Sciatic nerve (tissue), 2 donors: ENCODE measurements at regions of chr15 and their contacts with region 1.

Region 1: DNA sequence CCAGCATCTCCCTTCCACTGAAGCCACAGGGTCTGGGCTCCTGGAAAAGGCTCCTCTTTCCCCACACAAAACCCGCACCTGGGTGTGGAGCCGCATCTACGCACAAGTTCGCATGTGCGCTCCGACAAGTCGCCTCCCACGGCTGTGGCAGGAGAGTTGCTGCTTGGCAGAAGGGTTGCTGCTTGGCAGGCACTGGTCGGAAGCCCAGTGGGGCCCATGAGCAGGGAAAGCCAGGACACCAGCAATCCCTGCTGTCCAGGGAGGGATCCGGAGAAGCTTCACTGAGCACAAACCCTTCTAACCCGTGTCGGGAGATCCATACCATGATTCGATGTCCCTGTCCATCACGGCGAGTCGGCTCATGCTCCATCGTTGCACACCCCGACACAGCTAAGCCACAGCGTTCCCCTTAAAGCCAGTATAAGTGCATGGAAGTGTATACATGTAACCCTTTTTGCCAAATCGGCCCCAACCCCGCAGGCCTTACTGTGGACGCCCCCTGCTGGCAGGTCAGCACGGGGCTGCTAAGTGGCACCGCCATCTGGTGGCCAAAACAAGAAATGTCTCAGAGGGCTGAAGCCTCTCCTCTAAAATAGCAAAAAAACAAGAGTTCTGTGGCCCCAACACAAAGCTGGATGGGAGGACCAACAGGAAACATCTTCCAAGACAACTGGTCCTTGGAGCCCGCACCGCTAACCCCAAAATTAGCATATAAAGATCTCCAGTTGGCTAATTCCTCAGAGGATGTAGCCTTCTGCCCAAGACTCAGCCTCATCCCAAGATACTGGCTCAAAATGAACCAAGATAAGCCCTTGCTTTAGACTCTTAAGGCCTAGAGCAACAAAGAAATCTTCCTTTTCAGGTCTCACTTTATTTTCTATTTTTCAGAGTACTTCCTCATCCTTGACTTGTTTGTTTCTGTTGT is 8.3 kb downstream of the ANKRD63 start:
- DNase-seq: peak; percentile 91
- ATAC-seq: peak; percentile 34

Region 2: DNA sequence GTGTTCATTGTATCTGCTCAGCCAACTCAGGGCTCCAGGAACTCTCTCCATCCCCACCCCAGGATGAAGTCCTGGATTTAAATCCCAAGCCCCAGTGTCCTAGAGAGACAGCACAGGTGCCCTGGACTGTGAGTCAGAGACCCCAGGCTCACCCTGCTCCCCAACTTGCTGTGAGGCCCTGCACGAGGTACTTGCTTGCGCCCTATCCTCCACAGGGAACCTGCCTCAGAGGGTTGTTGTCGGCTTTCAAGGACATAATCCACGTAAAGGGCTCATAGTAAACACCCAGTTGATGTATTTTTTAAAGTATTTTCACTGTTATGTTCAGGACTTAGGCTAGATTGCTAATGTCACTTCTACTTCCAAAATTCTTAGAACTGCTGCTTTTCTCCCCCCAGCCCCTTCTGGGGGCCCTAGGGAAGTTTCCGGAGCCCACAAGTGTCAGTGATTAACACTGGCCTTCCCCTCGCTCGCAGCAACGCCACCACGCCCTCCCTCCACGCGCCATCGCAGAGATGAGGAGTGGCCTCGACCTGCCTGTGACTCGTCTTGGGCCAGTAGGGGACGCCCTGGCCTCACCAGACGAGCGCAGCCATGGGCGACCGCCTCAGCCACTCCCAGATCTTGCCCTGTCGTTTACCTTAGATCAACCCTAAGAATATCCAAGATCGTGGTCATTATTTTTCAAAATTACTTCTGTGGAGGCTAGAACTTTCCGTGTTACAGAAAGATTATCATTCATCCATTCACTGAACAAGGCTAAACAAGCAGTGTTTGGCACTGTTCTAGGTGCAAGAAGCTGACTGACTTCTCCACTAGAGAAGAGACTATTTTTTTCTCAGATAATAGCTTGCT is 229.7 kb before region 1 on chr15:
- intact Hi-C with region 1: loop called (anchors 5 kb)
- DNase-seq: peak; percentile 94
- ATAC-seq: peak; percentile 96

Region 3: DNA sequence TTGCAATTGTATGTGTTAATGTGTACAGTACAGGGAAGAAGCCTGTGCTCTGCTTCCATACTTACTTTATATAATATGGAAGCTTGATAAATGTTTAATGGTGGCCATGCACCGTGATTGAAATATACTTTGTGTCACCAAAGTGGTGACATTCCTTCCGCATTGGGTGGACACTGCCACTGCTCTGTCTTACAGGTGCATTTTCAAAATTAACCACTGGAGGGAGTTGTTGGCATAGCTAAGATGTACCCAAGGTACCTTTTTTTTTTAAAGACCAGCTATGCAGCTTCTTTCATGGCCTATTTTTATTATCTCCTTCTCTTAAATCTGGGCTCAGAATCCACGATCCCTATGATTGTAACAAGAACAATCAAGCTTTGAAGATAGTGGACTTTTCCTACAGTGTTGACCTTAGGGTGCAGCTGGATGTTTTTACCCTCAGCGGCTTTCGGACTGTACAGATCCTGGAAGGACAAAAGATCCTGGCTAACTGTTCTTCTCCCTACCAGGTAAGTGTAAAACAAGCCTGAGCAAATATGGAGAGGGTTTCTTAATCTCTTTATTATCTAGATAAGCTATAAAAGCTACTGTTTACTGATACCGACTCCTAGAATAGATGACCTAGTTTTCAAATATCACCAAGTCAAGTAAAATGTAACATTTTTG is 57.3 kb before region 1 on chr15:
- intact Hi-C with region 1: loop called (anchors 5 kb)
- DNase-seq: no peak
- ATAC-seq: peak; percentile 84

Region 4: DNA sequence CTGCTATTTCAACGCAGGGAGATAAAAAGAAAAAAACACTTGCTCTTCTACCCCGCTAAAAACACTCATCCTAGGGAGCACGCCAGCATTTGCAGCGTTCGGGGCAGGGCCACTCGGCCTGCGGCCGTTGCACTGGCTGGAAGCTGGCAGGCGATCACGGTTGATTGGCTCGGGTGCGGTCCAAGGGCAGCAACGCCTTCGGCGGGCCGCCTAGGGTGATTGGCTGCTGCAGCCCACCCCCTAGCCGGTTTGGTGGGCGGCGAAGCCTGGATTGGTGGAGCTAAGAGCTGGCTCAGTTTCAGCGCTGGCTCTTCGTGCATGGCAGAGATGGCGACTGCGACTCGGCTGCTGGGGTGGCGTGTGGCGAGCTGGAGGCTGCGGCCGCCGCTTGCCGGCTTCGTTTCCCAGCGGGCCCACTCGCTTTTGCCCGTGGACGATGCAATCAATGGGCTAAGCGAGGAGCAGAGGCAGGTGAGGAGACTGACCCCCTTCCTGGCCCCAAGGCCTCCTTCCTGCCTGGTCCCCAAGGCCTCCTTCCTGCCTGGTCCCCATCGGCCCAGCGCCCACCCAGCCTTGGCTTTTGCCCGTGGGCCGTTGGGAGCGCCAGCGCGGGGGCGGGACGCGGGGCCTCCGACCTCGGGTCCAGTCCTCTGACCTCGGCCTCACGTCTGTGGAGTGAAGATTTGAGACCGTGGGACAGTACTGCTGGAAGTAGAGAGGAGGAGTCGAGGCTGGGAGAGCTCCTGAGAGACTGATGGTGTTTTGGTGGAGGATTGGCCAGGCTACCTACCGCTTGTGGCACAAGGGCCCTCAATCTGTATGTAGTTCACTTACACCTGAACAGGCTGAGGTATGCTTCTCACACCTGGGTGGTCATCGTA is 131.1 kb after region 1 on chr15 and contains the start of gene IVD:
- intact Hi-C with region 1: no loop called
- DNase-seq: peak; percentile 97
- ATAC-seq: peak; percentile 100
- total RNA-seq, gene IVD: 67.8 TPM

Region 5: DNA sequence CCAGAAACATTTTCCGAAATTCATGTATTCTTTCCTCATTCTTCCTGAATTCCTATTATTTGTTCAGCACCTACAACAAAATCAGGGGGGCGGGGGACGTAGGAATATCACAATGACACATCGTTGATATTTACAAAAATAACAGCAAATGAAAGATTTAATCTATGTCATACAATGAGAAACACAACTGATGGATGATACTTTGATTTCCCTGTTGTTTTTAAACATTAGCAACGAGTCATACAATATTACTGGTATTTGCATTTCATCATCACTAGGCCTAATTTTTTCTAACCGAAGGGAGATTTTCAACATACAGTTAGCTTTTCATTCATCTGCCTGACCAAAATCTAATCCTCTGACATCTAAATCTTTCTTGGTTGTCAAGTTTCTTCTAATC is 886.7 kb after region 1 on chr15:
- intact Hi-C with region 1: no loop called
- DNase-seq: no peak
- ATAC-seq: no peak